OCI-LY7 (cell line): ENCODE measurements at regions of chr10 and their contacts with region 1.

Region 1: GRCh38 chr10:103507235-103508191 is 14.0 kb downstream of the NEURL1 start:
- DNase-seq: peak; percentile 85
- H3K4me3 ChIP-seq: no peak overlapping the region
- H3K27ac ChIP-seq: peak overlapping the region; percentile 4
- H3K4me1 ChIP-seq: peaks cover 19% of the 10 kb centered on the region
- CTCF ChIP-seq: peak; percentile 57; the same call in 1 of the 2 replicates

Region 2: DNA sequence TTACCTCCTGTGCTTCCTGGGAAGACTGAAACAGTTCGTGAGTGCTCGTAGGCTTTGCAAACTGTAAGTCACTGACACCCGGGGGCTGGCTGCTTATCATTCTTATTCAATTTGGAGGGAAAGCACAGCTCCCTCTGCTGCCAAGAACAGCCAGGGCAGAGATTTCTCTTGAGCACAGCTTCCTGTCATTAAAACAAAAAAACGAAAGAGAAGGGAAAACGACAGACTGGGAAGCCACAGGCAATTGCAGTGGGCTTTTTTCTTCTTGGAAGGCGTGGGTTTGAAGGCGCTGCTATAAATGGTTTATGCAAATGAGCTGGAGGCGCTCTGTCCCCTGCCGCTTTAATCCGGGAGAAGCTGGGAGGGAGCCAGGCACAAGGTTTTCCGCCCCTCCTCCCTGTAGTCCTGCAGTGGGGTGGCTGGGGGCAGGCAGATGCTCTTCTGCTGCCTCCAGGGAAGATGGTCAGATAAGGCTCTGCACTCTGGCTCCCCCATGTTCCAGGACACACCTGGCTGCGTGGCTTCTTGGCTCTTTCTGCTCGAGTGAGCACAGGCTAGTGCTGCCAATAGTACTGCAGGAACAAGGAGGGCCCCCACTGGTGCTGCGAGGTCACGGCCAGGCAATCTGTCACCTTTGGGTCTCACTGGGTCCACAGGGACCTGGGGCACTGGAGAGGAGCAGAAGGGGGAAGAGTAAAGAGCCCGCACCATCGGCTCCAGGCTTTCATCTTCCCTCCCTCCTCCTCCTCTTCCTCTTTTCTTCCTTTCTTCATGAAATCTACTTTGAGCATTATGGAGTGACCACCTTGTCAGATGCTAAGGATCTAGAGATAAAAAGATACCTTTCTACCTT is 35.5 kb after region 1 on chr10:
- CTCF ChIA-PET with region 1: interaction called, 5 read pairs
- POLR2A ChIA-PET with region 1: no interaction called
- intact Hi-C with region 1: loop called (anchors 5 kb)
- DNase-seq: peak; percentile 76
- H3K4me3 ChIP-seq: peak overlapping the region; percentile 56
- H3K27ac ChIP-seq: peak overlapping the region; percentile 18
- H3K4me1 ChIP-seq: peaks cover 58% of the 10 kb centered on the region
- CTCF ChIP-seq: peak; percentile 87

Region 3: GRCh38 chr10:103659674-103660363 is 152.3 kb after region 1 on chr10:
- CTCF ChIA-PET with region 1: no interaction called
- POLR2A ChIA-PET with region 1: no interaction called
- intact Hi-C with region 1: no loop called
- DNase-seq: no peak
- H3K4me3 ChIP-seq: no peak overlapping the region
- H3K27ac ChIP-seq: no peak overlapping the region
- H3K4me1 ChIP-seq: no peaks in the 10 kb centered on the region
- CTCF ChIP-seq: no peak